ENCODE measurements at regions of chr4 and their contacts with region 1.

Region 1: DNA sequence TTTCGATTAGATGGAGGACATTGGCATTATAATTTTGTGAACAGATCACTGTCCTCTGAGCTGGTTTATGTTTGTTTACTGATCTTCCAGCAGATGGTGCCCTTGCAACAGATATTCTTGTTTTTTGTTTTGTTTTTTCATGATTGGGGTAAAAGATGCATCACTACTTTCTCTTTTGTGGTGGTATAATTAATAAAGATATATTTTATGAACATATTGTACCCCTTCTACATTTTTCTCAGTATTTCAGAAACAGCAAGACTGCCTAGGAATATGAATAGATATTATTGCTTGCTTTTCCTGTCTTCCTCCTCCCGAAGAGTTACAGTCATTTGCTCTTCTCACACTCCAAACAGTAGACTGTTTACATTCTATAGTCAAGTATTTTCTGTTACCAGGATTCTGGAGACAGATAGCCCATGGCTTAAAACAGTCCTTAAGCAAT is 905.2 kb downstream of the TRAM1L1 start:
- DNase-seq: no peak
- H3K4me3 ChIP-seq: no peak overlapping the region
- H3K4me3 Mint-ChIP-seq: no peak overlapping the region
- H3K27ac Mint-ChIP-seq: no peak overlapping the region
- H3K4me1 ChIP-seq: no peaks in the 10 kb centered on the region
- H3K4me1 Mint-ChIP-seq: no peaks in the 10 kb centered on the region
- H3K27me3 ChIP-seq: no peaks in the 10 kb centered on the region
- H3K27me3 Mint-ChIP-seq: peaks cover 11% of the 10 kb centered on the region
- CTCF ChIP-seq: peak; percentile 25 to 31

Region 2: DNA sequence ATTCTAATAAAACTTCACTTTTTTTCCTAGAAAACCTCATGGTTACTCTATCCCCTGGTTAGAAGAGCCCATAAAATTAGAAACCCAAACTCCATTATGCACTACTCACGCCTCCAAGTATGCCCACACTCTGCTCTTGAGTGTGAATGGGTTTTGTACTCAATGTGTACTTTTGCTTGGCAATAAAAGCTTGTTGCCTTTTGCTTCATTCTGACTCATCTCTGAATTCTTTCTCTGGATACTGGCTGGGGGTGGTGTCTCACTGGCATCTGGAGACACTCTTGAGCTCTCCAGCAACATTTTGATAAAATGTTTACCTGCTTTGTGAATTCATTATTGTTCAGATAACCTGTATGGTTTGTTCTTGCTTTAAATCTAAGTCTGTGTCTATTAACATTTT is 58.1 kb before region 1 on chr4:
- CTCF ChIA-PET with region 1: no interaction called
- POLR2A ChIA-PET with region 1: no interaction called
- intact Hi-C with region 1: no loop called
- DNase-seq: peak in 1 of 2 experiments; percentile 16
- H3K4me3 ChIP-seq: no peak overlapping the region
- H3K4me3 Mint-ChIP-seq: no peak overlapping the region
- H3K27ac Mint-ChIP-seq: peak overlapping the region; percentile 69
- H3K4me1 ChIP-seq: peaks cover 6% of the 10 kb centered on the region; the same call in 1 of the 2 replicates
- H3K4me1 Mint-ChIP-seq: peaks cover 19% of the 10 kb centered on the region
- H3K27me3 ChIP-seq: no peaks in the 10 kb centered on the region
- H3K27me3 Mint-ChIP-seq: no peaks in the 10 kb centered on the region
- CTCF ChIP-seq: no peak

Region 3: DNA sequence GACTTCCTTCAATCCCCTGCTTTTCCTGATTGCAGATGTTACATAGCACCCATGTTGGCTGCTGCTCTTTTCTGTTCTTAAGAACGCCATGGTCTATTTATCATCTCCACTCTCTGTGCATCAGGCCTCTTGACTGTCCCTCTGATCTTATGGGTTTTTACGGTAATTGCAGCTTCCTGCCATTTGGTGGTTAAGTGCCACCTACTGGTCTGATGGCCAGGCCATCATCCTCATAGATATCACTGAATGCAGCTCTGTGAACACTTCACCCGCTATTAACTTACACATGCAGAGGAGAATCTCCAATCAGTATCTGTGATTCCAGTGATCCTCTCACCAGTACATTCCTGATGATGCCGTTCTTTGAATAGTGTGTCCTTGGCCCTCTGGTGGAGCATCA is 522.8 kb after region 1 on chr4:
- CTCF ChIA-PET with region 1: no interaction called
- POLR2A ChIA-PET with region 1: no interaction called
- intact Hi-C with region 1: loop called (anchors 1 kb)
- DNase-seq: peak in 1 of 2 experiments; percentile 34
- H3K4me3 ChIP-seq: no peak overlapping the region
- H3K4me3 Mint-ChIP-seq: no peak overlapping the region
- H3K27ac Mint-ChIP-seq: no peak overlapping the region
- H3K4me1 ChIP-seq: no peaks in the 10 kb centered on the region
- H3K4me1 Mint-ChIP-seq: no peaks in the 10 kb centered on the region
- H3K27me3 ChIP-seq: no peaks in the 10 kb centered on the region
- H3K27me3 Mint-ChIP-seq: no peaks in the 10 kb centered on the region
- CTCF ChIP-seq: peak; percentile 42 to 54

Measured in Caco-2 (cell line).